ENCODE measurements at regions of chr1 and their contacts with region 1.

Region 1: DNA sequence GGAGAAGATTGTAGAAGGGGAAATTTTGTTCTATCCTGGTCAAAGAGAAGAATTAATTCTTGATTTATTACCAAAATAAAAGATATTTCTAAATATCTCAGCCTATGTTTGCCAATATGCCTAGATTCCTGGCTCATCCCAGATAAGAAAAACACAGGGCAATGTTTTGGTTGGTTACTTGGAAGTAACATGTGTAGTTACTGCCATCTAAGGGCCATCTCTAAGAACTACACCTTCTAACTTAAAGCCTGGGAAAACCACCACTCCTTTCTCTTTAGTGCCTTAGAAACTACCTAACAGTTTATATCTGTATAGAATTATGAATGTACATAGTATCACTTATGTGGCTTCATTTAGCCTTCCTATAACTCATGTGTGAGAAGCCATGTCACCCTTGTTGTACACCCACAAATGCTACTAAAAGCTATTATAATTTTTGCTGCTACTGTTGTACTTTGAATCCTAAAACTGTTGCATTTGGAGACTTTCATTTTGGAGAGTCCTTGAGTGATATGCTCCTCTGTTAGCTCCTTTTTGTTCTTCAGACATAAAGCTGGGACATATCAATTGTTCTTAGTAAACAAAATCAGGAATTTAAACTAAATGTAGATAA is 4.5 kb downstream of the AIM2 start:
- DNase-seq: no peak
- ATAC-seq: peak; percentile 12
- H3K4me3 Mint-ChIP-seq: peak overlapping the region; percentile 42
- H3K27ac Mint-ChIP-seq: peak overlapping the region; percentile 63
- H3K4me1 Mint-ChIP-seq: peaks cover 52% of the 10 kb centered on the region
- H3K27me3 Mint-ChIP-seq: no peaks in the 10 kb centered on the region

Region 2: DNA sequence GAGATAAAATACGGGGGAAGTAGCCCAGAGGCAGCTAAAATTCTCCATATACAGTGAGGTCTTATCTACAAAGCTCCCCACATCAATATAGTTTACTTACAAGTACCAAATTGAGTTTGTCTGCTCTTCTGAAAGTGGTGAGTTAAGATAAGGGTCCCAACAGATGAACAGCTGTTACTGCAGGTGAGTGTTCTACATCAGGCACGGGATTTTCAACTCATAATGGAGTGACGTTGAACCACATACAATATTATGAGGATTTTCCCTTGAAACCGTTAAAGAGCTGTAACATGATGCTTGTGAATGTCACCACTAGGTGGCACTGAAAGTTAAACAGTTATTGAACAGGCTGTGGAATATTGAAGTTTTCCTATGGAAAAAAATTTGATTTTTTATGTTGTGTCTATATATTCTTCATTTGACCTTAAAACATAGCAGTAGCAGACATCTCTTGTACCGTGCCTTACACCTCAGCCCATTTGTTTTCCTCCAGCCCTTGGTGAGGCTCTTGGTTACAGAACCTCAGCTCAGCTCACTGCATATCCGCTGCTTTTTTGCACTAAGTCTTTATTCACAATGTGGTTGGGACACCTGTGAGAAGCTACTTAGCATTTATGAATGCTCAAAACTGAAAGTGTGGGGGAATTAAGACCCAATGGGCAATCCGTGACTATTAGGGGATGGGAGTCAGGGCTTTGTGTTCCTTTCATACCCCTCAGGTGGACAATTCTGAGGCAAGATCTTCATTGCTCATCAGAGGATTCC is 868.2 kb before region 1 on chr1:
- CTCF ChIA-PET with region 1: interaction called, 9 read pairs
- POLR2A ChIA-PET with region 1: no interaction called
- intact Hi-C with region 1: loop called (anchors 2 to 5 kb)
- DNase-seq: peak; percentile 20
- ATAC-seq: peak; percentile 87
- H3K4me3 Mint-ChIP-seq: no peak overlapping the region
- H3K27ac Mint-ChIP-seq: no peak overlapping the region
- H3K4me1 Mint-ChIP-seq: peaks cover 9% of the 10 kb centered on the region
- H3K27me3 Mint-ChIP-seq: peaks cover 22% of the 10 kb centered on the region

Region 3: DNA sequence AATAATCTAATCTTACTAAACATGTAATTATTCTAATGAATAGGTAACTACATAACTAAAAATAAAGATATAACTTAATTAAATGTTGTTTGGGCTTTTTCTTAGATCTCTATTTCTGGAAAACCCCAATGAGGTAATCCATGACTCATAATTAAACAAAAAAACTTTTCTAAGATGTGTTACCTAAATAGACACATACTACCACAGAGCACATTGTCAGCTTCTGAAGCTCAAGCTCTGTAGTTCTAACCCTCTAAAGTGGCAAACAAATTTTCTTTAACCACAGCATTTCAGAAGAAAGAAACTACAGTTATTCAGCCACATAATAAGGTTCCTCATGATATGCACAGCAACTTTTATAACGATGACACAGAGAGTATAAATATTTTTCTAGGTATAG is 355.7 kb before region 1 on chr1:
- CTCF ChIA-PET with region 1: no interaction called
- POLR2A ChIA-PET with region 1: no interaction called
- intact Hi-C with region 1: loop called in 1 of 2 experiments (anchors 2 kb)
- DNase-seq: no peak
- ATAC-seq: peak; percentile 74
- H3K4me3 Mint-ChIP-seq: no peak overlapping the region
- H3K27ac Mint-ChIP-seq: no peak overlapping the region
- H3K4me1 Mint-ChIP-seq: peaks cover 5% of the 10 kb centered on the region
- H3K27me3 Mint-ChIP-seq: peaks cover 27% of the 10 kb centered on the region

Region 4: DNA sequence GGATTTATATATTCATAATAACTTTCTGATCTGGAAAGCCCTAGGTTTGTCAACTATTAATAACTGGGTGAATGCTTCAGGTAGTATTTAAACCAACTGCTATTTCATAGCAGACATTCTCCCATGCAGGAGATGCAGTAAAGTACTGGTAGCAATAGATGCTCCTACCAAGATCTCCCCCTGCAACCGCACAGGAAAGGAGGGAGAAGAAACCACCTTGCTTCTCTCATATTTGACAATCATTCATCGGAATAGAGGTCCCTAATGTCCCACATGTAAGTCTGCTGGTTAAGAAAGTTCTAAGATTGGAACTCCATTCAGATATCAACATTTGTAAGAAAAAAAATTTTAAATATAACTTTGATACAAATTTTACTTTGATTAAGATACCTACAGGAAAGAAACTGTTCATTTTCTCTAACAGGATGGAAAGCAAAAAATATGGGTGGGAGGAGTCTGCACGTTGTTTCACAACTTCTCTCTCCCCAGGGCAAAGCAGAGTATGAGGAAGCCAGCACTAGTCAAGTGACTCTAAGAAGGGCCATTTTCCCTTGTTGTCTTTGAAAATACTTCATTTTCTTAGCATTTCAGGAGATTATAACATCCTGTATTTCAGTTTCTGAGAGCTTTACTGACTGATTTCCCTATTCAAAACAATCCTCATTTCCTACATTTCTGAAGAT is 140.9 kb before region 1 on chr1 and contains the start of gene PYHIN1:
- CTCF ChIA-PET with region 1: interaction called, 3 read pairs
- POLR2A ChIA-PET with region 1: no interaction called
- intact Hi-C with region 1: loop called (anchors 2 to 10 kb)
- DNase-seq: peak; percentile 30
- ATAC-seq: peak; percentile 79
- H3K4me3 Mint-ChIP-seq: peak within 1 kb of the TSS; percentile 65
- H3K27ac Mint-ChIP-seq: peak within 1 kb of the TSS; percentile 75
- H3K4me1 Mint-ChIP-seq: peaks cover 32% of the 10 kb centered on the region
- H3K27me3 Mint-ChIP-seq: peaks cover 3% of the 10 kb centered on the region
- total RNA-seq, gene PYHIN1: 5.6 to 6.8 TPM

Region 5: GRCh38 chr1:159089184-159089791 is 17.2 kb after region 1 on chr1:
- CTCF ChIA-PET with region 1: interaction called, 76 read pairs
- POLR2A ChIA-PET with region 1: interaction called, 61 read pairs
- intact Hi-C with region 1: loop called (anchors 1 kb)
- DNase-seq: no peak
- ATAC-seq: peak; percentile 37
- H3K4me3 Mint-ChIP-seq: no peak overlapping the region
- H3K27ac Mint-ChIP-seq: peak overlapping the region; percentile 78
- H3K4me1 Mint-ChIP-seq: peaks cover 51% of the 10 kb centered on the region
- H3K27me3 Mint-ChIP-seq: peaks cover 2% of the 10 kb centered on the region

Measured in activated CD4-positive, alpha-beta T cell treated with anti-CD3 and anti-CD28 coated beads for 36 hours (primary cell).